Activated CD4-positive, alpha-beta T cell treated with anti-CD3 and anti-CD28 coated beads for 36 hours (primary cell): ENCODE measurements at regions of chr6 and their contacts with region 1.

Region 1: GRCh38 chr6:111804627-111805235 is 68.5 kb downstream of the FYN start:
- DNase-seq: peak; percentile 83
- ATAC-seq: peak; percentile 62
- H3K4me3 Mint-ChIP-seq: peak overlapping the region; percentile 60
- H3K27ac Mint-ChIP-seq: peak overlapping the region; percentile 98
- H3K4me1 Mint-ChIP-seq: peaks cover 98% of the 10 kb centered on the region
- H3K27me3 Mint-ChIP-seq: no peaks in the 10 kb centered on the region

Region 2: DNA sequence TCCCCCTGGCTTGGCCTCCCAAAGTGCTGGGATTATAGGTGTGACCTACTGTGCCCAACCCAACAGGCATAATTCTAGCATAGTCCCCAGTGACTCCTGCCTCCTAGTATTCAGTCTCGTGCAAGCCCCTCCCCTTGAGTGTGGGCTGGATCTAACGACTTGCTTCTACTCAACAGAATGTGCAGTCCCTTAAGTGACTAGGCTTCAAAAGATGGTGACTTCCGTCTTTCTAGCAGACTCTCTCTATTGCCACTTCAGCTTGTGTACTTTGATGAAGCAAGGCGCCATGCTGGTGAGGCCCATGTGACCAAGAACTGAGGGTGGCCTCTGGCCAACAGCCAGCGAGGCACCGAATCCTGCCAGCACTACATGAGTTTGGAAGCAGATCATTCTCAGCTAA is 89.4 kb before region 1 on chr6:
- CTCF ChIA-PET with region 1: interaction called, 7 read pairs
- POLR2A ChIA-PET with region 1: no interaction called
- intact Hi-C with region 1: loop called in 1 of 2 experiments (anchors 2 kb)
- DNase-seq: peak; percentile 73
- ATAC-seq: peak; percentile 91
- H3K4me3 Mint-ChIP-seq: peak overlapping the region; percentile 11
- H3K27ac Mint-ChIP-seq: peak overlapping the region; percentile 95
- H3K4me1 Mint-ChIP-seq: peaks cover 93% of the 10 kb centered on the region
- H3K27me3 Mint-ChIP-seq: no peaks in the 10 kb centered on the region

Region 3: DNA sequence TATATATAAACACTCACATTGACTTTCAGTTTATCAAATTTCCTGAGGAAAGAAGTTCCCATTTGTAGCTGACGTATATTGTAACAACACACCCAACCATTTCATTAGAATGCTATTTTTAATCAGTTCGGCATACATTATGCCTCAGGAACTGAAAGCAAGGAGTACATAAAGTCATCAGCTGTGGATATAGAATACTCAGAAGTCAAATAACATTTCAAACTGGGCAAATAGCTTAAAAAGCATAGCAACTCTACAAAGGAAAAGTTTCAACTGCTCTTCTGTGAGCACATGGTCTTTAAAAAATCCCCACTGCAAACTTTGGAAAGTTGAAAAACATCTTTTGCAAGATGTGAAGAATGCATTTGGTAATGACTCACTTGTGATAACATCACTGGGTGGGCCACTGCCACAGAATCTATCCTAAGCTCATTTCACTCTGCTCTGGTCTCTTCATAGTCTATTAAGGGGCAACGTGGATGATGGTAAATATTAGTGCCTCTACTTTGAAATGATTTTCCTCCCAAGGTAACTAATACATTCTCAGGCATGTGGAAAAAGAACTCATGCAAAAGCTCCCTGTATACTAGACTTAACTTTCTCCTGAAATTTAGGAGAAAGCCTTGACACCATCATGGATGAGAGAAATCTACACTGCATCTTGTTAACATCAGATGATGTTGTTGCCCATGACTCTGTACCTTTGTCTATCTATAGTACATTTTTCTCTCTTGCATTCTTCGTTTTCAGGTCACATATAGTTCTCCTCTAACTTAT is 19.3 kb after region 1 on chr6:
- CTCF ChIA-PET with region 1: interaction called, 44 read pairs
- POLR2A ChIA-PET with region 1: interaction called, 34 read pairs
- intact Hi-C with region 1: loop called (anchors 1 kb)
- DNase-seq: peak; percentile 49
- ATAC-seq: peak; percentile 64
- H3K4me3 Mint-ChIP-seq: peak overlapping the region; percentile 63
- H3K27ac Mint-ChIP-seq: peak overlapping the region; percentile 97
- H3K4me1 Mint-ChIP-seq: peaks cover 89% of the 10 kb centered on the region
- H3K27me3 Mint-ChIP-seq: no peaks in the 10 kb centered on the region

Region 4: DNA sequence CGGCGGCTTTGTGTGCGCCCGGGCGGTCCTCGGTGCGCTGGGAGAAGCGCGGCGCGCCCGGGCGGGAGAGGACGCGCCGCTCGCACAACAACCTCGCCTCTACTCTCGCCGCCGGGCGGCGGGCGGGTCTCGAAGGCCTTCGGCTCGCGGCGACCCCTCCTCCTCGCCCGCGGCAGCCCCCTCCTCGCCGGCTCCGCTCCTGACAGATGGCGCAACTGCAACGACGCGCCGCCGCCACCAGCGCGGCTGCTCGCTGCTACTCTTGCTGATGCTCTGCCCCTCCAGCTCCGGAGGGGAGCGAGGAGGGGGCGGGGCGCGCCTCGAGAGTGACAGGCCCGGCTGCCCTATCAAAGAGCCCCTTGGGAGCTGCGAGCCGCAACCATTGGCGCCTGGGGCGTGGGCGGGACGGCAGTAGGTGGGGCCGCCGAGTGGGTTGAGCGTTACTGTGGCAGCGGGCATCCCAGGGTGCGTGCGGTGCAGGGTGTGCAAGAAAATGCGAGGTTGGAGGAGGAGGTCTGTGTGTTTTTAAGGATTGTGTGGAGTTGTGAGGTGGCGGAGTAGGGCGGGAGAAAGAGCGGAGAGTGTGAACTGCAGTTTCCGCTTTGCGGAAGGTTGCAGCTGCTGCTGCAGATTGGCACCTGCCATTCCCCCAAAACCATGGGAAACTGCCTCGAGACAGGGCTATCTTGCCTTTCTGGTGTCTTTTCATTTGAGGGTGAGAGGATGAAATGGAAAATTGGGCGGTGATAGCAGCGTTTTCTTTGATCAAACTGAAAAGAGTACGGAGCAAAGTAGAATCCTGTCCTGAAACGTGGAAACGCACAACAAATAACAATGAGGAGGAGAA is 68.7 kb after region 1 on chr6 and contains the start of gene FYN:
- CTCF ChIA-PET with region 1: interaction called, 11 read pairs
- POLR2A ChIA-PET with region 1: interaction called, 5 read pairs
- intact Hi-C with region 1: loop called (anchors 1 kb)
- DNase-seq: peak; percentile 100
- ATAC-seq: peak; percentile 87
- H3K4me3 Mint-ChIP-seq: peak within 1 kb of the TSS; percentile 98
- H3K27ac Mint-ChIP-seq: peak within 1 kb of the TSS; percentile 91
- H3K4me1 Mint-ChIP-seq: peaks cover 35% of the 10 kb centered on the region
- H3K27me3 Mint-ChIP-seq: no peaks in the 10 kb centered on the region
- total RNA-seq, gene FYN: 345 to 504 TPM

Region 5: GRCh38 chr6:111997078-111997852 is 192.5 kb after region 1 on chr6:
- CTCF ChIA-PET with region 1: interaction called, 4 read pairs
- POLR2A ChIA-PET with region 1: no interaction called
- intact Hi-C with region 1: loop called in 1 of 2 experiments (anchors 2 kb)
- DNase-seq: peak; percentile 89
- ATAC-seq: peak; percentile 71
- H3K4me3 Mint-ChIP-seq: peak overlapping the region; percentile 43
- H3K27ac Mint-ChIP-seq: peak overlapping the region; percentile 72
- H3K4me1 Mint-ChIP-seq: peaks cover 51% of the 10 kb centered on the region
- H3K27me3 Mint-ChIP-seq: no peaks in the 10 kb centered on the region